ENCODE measurements at regions of chr10 and their contacts with region 1.

Region 1: DNA sequence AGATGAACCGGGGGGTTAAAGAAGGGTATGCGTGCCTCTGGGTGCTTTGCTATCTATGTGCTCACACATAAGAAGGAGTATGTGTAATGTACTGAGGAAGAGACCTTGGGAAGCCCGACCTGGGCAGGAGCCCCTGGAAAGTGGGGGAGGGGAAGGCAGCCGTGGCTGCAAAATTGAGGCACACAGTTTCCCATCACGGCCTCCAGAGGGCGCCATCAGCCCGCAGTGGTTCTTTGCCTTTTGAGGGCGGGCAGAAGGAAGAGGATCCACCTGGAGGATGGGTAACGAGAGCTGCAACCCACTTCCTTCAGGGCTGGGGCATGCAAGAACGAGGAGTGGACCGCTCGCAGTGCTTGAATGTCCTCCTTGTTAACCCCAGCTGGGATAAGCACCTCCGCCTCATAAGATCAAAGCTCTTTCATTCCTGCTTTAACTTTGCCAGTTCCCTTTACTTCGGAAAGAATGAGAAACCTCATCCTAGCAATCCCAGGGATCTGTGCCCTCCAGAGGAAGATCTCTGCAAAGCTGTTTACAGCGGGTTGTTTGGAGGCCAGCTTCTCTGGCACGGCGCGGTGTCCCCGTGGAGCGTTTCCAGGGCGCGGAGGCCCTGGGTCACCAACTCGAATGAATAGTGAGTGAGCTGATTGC is 77.9 kb downstream of the PCGF5 start:
- DNase-seq: peak; percentile 86
- ATAC-seq: peak; percentile 95
- H3K4me3 Mint-ChIP-seq: peak overlapping the region; percentile 63
- H3K27ac Mint-ChIP-seq: peak overlapping the region; percentile 47; the same call in 1 of the 2 replicates
- H3K4me1 Mint-ChIP-seq: peaks cover 19% of the 10 kb centered on the region
- H3K27me3 Mint-ChIP-seq: no peaks in the 10 kb centered on the region; the same call in 1 of the 2 replicates
- CTCF ChIP-seq: peak; percentile 86

Region 2: GRCh38 chr10:90912174-90912573 is 386.2 kb before region 1 on chr10:
- CTCF ChIA-PET with region 1: interaction called, 14 read pairs
- POLR2A ChIA-PET with region 1: no interaction called
- DNase-seq: no peak
- ATAC-seq: no peak
- H3K4me3 Mint-ChIP-seq: no peak overlapping the region
- H3K27ac Mint-ChIP-seq: no peak overlapping the region
- H3K4me1 Mint-ChIP-seq: peaks cover 9% of the 10 kb centered on the region
- H3K27me3 Mint-ChIP-seq: peaks cover 80% of the 10 kb centered on the region
- CTCF ChIP-seq: no peak

Region 3: GRCh38 chr10:91140995-91141549 is 157.3 kb before region 1 on chr10:
- CTCF ChIA-PET with region 1: no interaction called
- POLR2A ChIA-PET with region 1: no interaction called
- DNase-seq: no peak
- ATAC-seq: no peak
- H3K4me3 Mint-ChIP-seq: no peak overlapping the region
- H3K27ac Mint-ChIP-seq: no peak overlapping the region
- H3K4me1 Mint-ChIP-seq: no peaks in the 10 kb centered on the region
- H3K27me3 Mint-ChIP-seq: no peaks in the 10 kb centered on the region; the same call in 1 of the 2 replicates
- CTCF ChIP-seq: no peak

Region 4: DNA sequence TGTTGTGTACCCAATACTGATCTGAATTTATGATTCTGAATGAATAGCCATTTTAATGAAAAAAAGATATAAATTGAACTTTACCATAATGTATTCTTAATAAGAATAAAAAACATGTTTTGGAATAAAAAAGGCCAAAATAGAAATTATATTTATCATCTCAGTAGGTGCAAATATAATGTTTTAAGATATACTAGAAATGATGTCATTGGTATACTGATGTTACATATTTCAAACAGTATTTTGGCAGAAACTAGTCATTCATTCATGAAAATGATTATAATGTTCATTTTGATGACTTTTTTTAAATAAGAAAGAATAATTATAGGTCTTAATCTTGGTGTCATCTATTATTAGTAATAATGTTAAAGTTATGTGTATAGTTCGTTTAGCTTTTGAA is 68.7 kb before region 1 on chr10:
- CTCF ChIA-PET with region 1: no interaction called
- POLR2A ChIA-PET with region 1: no interaction called
- DNase-seq: no peak
- ATAC-seq: no peak
- H3K4me3 Mint-ChIP-seq: no peak overlapping the region
- H3K27ac Mint-ChIP-seq: no peak overlapping the region
- H3K4me1 Mint-ChIP-seq: 0 out of 2 replicates have a peak, but pooled peaks cover 2% of the 10 kb centered on the region
- H3K27me3 Mint-ChIP-seq: peaks cover 15% of the 10 kb centered on the region
- CTCF ChIP-seq: no peak

Region 5: GRCh38 chr10:91242940-91243339 is 55.4 kb before region 1 on chr10:
- CTCF ChIA-PET with region 1: no interaction called
- POLR2A ChIA-PET with region 1: no interaction called
- DNase-seq: no peak
- ATAC-seq: no peak
- H3K4me3 Mint-ChIP-seq: no peak overlapping the region
- H3K27ac Mint-ChIP-seq: no peak overlapping the region
- H3K4me1 Mint-ChIP-seq: no peaks in the 10 kb centered on the region; the same call in 1 of the 2 replicates
- H3K27me3 Mint-ChIP-seq: peaks cover 45% of the 10 kb centered on the region
- CTCF ChIP-seq: no peak

Region 6: GRCh38 chr10:91287276-91287675 is 11.1 kb before region 1 on chr10:
- CTCF ChIA-PET with region 1: interaction called, 26 read pairs
- POLR2A ChIA-PET with region 1: no interaction called
- DNase-seq: no peak
- ATAC-seq: no peak
- H3K4me3 Mint-ChIP-seq: no peak overlapping the region
- H3K27ac Mint-ChIP-seq: no peak overlapping the region
- H3K4me1 Mint-ChIP-seq: no peaks in the 10 kb centered on the region
- H3K27me3 Mint-ChIP-seq: peaks cover 12% of the 10 kb centered on the region
- CTCF ChIP-seq: no peak

Region 7: DNA sequence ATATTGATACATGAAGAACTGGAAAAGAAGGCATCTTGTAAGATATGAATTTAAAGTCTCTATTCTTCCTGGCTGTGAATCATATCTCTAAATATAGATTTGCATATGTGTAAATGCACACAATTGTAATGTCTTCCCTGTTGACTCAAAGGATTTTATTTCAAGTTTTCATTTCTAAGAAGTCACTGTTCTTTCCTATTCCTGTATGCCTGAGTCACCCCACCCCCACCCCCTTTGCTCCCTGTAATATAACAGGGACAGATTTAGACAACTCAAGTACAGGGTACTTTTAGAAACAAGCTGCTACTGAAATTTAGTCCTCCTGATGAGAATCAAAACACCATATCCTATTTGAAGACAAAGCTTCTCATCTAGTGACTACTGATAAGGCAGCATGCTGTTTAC is 68.8 kb after region 1 on chr10:
- CTCF ChIA-PET with region 1: interaction called, 29 read pairs
- POLR2A ChIA-PET with region 1: no interaction called
- DNase-seq: no peak
- ATAC-seq: no peak
- H3K4me3 Mint-ChIP-seq: no peak overlapping the region
- H3K27ac Mint-ChIP-seq: no peak overlapping the region
- H3K4me1 Mint-ChIP-seq: no peaks in the 10 kb centered on the region
- H3K27me3 Mint-ChIP-seq: peaks cover 5% of the 10 kb centered on the region
- CTCF ChIP-seq: no peak

Region 8: DNA sequence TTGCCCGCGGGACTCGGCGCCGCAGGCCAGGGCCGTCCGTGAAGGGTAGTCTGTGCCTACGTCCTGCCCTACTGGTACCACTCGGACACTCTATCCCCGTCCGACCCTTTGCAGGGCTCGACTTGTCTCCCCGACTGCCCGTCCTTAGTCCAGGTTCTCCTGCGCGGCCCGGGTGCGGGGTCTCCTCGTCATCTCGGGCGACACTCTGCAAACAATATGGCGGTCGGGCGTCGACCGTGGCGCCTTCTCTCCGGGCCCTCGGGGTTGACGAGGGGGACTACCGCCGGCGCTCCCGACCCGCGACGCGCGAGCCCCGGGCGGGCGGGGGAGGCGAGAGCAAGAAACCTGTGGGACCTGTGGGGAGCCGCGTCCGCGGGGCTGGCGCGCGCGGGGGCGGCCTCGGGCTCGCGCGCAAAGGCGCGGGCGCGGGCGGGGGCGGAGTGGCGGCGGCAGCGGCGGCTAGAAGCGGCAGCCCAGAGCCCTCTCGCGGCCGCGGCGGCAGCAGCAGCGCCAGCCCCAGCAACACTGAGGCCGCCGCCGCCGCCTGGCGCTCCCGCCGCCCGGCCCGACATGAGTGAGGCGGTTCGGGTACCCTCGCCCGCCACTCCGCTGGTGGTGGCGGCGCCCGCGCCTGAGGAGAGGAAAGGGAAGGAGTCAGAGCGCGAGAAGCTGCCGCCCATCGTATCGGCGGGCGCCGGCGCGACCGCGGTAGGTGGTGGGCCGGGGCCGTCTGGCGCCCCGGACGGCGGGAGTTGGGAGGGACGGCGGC is 111.7 kb after region 1 on chr10 and contains the start of gene HECTD2:
- CTCF ChIA-PET with region 1: interaction called, 16 read pairs
- POLR2A ChIA-PET with region 1: no interaction called
- DNase-seq: peak; percentile 77
- ATAC-seq: peak; percentile 79
- H3K4me3 Mint-ChIP-seq: peak within 1 kb of the TSS; percentile 93
- H3K27ac Mint-ChIP-seq: peak within 1 kb of the TSS; percentile 98
- H3K4me1 Mint-ChIP-seq: peaks cover 49% of the 10 kb centered on the region
- H3K27me3 Mint-ChIP-seq: peaks cover 4% of the 10 kb centered on the region; the same call in 1 of the 2 replicates
- CTCF ChIP-seq: no peak
- total RNA-seq, gene HECTD2: 6.5 to 9.4 TPM (median 8.5 TPM) in 3 replicates

Region 9: GRCh38 chr10:91632671-91633550 is 334.6 kb after region 1 on chr10 and contains the start of gene PPP1R3C:
- CTCF ChIA-PET with region 1: interaction called, 31 read pairs
- POLR2A ChIA-PET with region 1: no interaction called
- DNase-seq: peak; percentile 85
- ATAC-seq: peak; percentile 90
- H3K4me3 Mint-ChIP-seq: peak within 1 kb of the TSS; percentile 74
- H3K27ac Mint-ChIP-seq: no peak within 1 kb of the TSS
- H3K4me1 Mint-ChIP-seq: peaks cover 13% of the 10 kb centered on the region
- H3K27me3 Mint-ChIP-seq: peaks cover 50% of the 10 kb centered on the region
- CTCF ChIP-seq: no peak
- total RNA-seq, gene PPP1R3C: 1.5 to 3.3 TPM (median 2.8 TPM) in 3 replicates

Measured in WTC11 (cell line).